Activated B cell treated with CpG ODN at 0.5 μM for 24 hours (primary cell): ENCODE measurements at regions of chr2 and their contacts with region 1.

Region 1: DNA sequence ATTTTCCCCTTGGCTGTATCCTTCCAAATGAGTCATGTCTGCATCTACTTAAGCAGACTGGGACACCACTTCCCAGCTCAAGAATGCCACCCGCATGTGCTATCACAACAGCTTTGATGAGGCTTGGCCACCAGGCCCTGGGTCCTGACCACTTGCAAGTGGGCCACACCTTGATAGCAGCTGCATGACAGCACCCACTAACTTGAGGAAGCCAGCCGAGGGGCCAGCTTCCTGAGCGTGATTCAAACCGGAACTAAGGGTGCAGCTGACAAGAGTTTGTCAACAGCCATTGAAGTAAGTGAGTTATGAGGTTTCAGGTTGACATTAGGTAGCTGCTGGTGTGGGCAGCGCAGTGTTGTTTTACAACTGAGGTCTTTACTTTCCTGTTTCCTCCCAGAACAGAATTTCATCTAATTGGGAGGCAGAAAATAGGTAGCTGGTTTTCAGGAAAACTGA is 54.4 kb downstream of the EPHA4 start:
- DNase-seq: peak; percentile 32
- ATAC-seq: peak; percentile 76
- H3K4me3 Mint-ChIP-seq: no peak overlapping the region
- H3K27ac Mint-ChIP-seq: no peak overlapping the region
- H3K4me1 Mint-ChIP-seq: peaks cover 14% of the 10 kb centered on the region
- H3K27me3 Mint-ChIP-seq: no peaks in the 10 kb centered on the region
- CTCF ChIP-seq: no peak

Region 2: GRCh38 chr2:221465776-221466175 is 51.9 kb before region 1 on chr2:
- CTCF ChIA-PET with region 1: interaction called, 3 read pairs
- POLR2A ChIA-PET with region 1: interaction called, 17 read pairs
- intact Hi-C with region 1: loop called (anchors 2 kb)
- DNase-seq: peak; percentile 16
- ATAC-seq: peak; percentile 82
- H3K4me3 Mint-ChIP-seq: peak overlapping the region; percentile 71
- H3K27ac Mint-ChIP-seq: peak overlapping the region; percentile 72
- H3K4me1 Mint-ChIP-seq: peaks cover 60% of the 10 kb centered on the region
- H3K27me3 Mint-ChIP-seq: no peaks in the 10 kb centered on the region
- CTCF ChIP-seq: no peak

Region 3: GRCh38 chr2:221924576-221924975 is 406.9 kb after region 1 on chr2:
- CTCF ChIA-PET with region 1: no interaction called
- POLR2A ChIA-PET with region 1: no interaction called
- intact Hi-C with region 1: no loop called
- DNase-seq: no peak
- ATAC-seq: no peak
- H3K4me3 Mint-ChIP-seq: no peak overlapping the region
- H3K27ac Mint-ChIP-seq: no peak overlapping the region
- H3K4me1 Mint-ChIP-seq: no peaks in the 10 kb centered on the region
- H3K27me3 Mint-ChIP-seq: no peaks in the 10 kb centered on the region
- CTCF ChIP-seq: no peak